ENCODE measurements at regions of chr15 and their contacts with region 1.

Region 1: GRCh38 chr15:60720493-60721256 is 241.7 kb upstream of the ICE2 start:
- DNase-seq: peak; percentile 84
- ATAC-seq: peak; percentile 86
- H3K4me3 Mint-ChIP-seq: peak overlapping the region; percentile 43
- H3K27ac Mint-ChIP-seq: peak overlapping the region; percentile 95
- H3K4me1 Mint-ChIP-seq: peaks cover 61% of the 10 kb centered on the region
- H3K27me3 Mint-ChIP-seq: no peaks in the 10 kb centered on the region

Region 2: GRCh38 chr15:60464836-60465630 is 255.6 kb before region 1 on chr15:
- CTCF ChIA-PET with region 1: no interaction called
- POLR2A ChIA-PET with region 1: no interaction called
- intact Hi-C with region 1: no loop called
- DNase-seq: no peak
- ATAC-seq: no peak
- H3K4me3 Mint-ChIP-seq: no peak overlapping the region
- H3K27ac Mint-ChIP-seq: no peak overlapping the region
- H3K4me1 Mint-ChIP-seq: peaks cover 6% of the 10 kb centered on the region
- H3K27me3 Mint-ChIP-seq: no peaks in the 10 kb centered on the region

Region 3: DNA sequence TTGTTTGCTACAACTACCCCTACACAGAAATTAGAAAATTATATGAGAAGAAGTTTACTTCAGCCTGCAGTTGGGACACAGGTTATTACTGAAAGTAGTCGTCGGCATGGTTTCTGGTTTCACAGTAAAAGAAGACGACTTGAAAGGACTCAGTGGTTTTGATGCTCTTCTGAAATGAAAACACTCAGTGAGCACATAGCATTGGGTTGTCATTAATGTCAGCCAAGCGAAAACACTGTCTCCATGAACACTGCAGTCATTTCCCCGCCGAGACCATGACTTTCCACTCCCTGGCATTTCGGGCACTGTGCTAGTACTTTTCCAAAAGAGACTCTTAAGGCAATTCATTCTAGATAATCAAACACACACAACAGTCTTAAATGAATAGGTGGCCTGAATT is 172.6 kb before region 1 on chr15:
- CTCF ChIA-PET with region 1: no interaction called
- POLR2A ChIA-PET with region 1: no interaction called
- intact Hi-C with region 1: loop called (anchors 1 kb)
- DNase-seq: peak; percentile 84
- ATAC-seq: peak; percentile 83
- H3K4me3 Mint-ChIP-seq: peak overlapping the region; percentile 61
- H3K27ac Mint-ChIP-seq: peak overlapping the region; percentile 96
- H3K4me1 Mint-ChIP-seq: peaks cover 97% of the 10 kb centered on the region
- H3K27me3 Mint-ChIP-seq: no peaks in the 10 kb centered on the region

Region 4: GRCh38 chr15:60695713-60696522 is 24.8 kb before region 1 on chr15:
- CTCF ChIA-PET with region 1: no interaction called
- POLR2A ChIA-PET with region 1: interaction called, 5 read pairs
- intact Hi-C with region 1: loop called (anchors 1 to 2 kb)
- DNase-seq: peak; percentile 93
- ATAC-seq: peak; percentile 84
- H3K4me3 Mint-ChIP-seq: peak overlapping the region; percentile 58
- H3K27ac Mint-ChIP-seq: peak overlapping the region; percentile 81
- H3K4me1 Mint-ChIP-seq: peaks cover 74% of the 10 kb centered on the region
- H3K27me3 Mint-ChIP-seq: no peaks in the 10 kb centered on the region

Region 5: DNA sequence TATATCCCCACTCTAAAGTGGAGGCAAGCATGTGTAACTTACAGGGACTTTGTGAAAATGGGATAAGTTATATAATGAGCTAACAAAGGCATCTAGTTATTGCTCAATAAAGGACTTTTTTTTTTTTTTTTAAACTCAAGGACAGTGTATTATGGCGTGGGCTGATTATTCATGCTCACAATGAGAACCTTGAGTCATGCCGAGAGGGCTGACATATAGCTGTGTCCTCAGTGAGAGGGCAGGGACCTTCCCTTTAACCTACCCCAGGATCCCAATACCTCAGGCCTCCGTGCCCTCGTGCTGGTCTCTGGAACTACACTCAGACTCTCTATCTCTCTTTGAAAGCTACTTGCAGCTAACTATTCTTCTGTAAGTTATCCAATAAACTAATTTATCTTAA is 78.1 kb after region 1 on chr15:
- CTCF ChIA-PET with region 1: interaction called, 10 read pairs
- POLR2A ChIA-PET with region 1: interaction called, 11 read pairs
- intact Hi-C with region 1: loop called (anchors 1 to 2 kb)
- DNase-seq: peak; percentile 81
- ATAC-seq: peak; percentile 80
- H3K4me3 Mint-ChIP-seq: no peak overlapping the region
- H3K27ac Mint-ChIP-seq: peak overlapping the region; percentile 95
- H3K4me1 Mint-ChIP-seq: peaks cover 85% of the 10 kb centered on the region
- H3K27me3 Mint-ChIP-seq: no peaks in the 10 kb centered on the region

Region 6: DNA sequence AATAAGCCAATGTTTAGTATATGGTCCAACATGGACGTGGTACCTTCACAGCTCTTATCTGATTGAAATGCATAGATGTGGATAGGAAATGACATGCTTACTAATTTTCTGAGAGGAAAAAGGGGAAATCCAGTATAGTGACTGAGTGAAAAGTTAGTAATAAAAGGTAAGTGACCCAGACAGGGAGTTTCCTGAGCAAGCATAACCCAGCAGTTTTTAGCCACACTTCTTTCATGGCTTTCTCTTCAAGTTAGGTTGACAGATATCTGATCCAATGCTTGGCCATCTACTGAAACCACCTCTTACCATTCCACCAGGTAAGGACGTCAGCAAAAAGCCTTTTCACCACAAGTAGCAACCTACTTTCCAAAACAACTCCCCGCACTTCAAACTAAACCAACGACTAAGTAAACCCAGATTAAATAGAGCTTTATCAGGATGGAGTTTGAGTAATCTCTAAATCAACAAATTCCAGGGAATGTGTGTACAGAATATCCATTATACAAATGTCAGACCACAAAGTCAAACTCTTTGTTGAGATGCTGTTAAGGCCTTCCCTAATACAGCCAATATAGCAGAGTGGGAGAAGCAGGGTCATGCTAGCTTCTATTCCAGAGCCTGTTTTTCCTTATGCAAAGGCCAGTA is 178.8 kb after region 1 on chr15:
- CTCF ChIA-PET with region 1: interaction called, 10 read pairs
- POLR2A ChIA-PET with region 1: interaction called, 3 read pairs
- intact Hi-C with region 1: loop called (anchors 1 kb)
- DNase-seq: peak; percentile 42
- ATAC-seq: peak; percentile 85
- H3K4me3 Mint-ChIP-seq: no peak overlapping the region
- H3K27ac Mint-ChIP-seq: peak overlapping the region; percentile 66
- H3K4me1 Mint-ChIP-seq: peaks cover 53% of the 10 kb centered on the region
- H3K27me3 Mint-ChIP-seq: peaks cover 6% of the 10 kb centered on the region

Measured in activated CD4-positive, alpha-beta T cell treated with anti-CD3 and anti-CD28 coated beads for 36 hours (primary cell).